Heart left ventricle (tissue), 16 donors: ENCODE measurements at regions of chr12 and their contacts with region 1.

Region 1: GRCh38 chr12:7142056-7142644 is 12.0 kb downstream of the CLSTN3 start:
- DNase-seq: no peak
- ATAC-seq: peak in 2 of 4 donors; percentile 19 to 49
- H3K4me3 ChIP-seq: no peak overlapping the region
- H3K27ac ChIP-seq: no peak overlapping the region
- H3K4me1 ChIP-seq: peaks cover 0 to 6% (median 0%) of the 10 kb centered on the region in 12 donors
- H3K27me3 ChIP-seq: no peaks in the 10 kb centered on the region
- CTCF ChIP-seq: peak; percentile 33 to 63 (median 44)
- POLR2A ChIP-seq: no peak

Region 2: GRCh38 chr12:7188562-7189397 is 46.6 kb after region 1 on chr12:
- intact Hi-C with region 1: loop called in 2 of 10 experiments (anchors 5 kb)
- DNase-seq: peak; percentile 59 to 76 (median 70)
- ATAC-seq: peak; percentile 58 to 79 (median 66)
- H3K4me3 ChIP-seq: peak overlapping the region; percentile 67 to 95 (median 78)
- H3K27ac ChIP-seq: peak overlapping the region; percentile 68 to 97 (median 87)
- H3K4me1 ChIP-seq: peaks cover 4 to 30% (median 13%) of the 10 kb centered on the region in 12 donors
- H3K27me3 ChIP-seq: no peaks in the 10 kb centered on the region
- CTCF ChIP-seq: peak; percentile 34 to 70 (median 53)
- POLR2A ChIP-seq: peak in 1 of 2 donors; percentile 5

Region 3: DNA sequence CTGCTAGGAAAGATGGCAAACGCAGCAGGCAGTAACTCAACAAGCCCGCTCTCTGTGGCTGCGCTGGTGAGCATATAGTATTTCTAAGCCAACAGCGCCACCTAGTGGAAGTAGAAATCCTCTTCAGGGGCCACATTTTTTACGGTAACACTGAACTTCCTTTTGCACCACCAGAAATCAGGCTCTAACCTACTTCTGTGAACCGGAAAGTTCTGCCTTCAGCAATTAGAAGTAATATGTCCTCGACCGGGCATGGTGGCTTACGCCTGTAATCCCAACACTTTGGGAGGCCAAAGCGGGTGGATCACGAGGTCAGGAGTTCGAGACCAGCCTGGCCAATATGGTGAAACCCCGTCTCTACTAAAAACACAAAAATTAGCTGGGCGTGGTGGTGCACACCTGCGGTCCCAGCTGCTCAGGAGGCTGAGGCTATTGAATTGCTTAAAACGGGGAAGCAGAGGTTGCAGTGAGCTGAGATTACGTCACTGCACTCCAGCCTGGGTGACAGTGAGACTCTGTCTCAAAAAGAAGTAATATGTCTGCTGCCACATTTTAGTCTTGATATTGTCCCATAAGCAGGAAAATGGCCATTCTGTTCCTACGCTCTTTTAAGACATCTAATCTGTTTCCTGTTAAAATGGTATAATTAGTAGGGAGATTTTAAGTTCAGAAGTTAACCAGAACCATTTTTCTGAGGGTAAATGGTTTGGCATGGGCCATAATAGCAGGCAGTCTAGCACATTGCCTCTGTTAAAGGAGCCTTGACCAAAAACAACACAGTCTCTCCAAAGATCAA is 496.8 kb after region 1 on chr12:
- intact Hi-C with region 1: loop called in 1 of 10 experiments (anchors 10 kb)
- DNase-seq: peak; percentile 70 to 74 (median 72)
- ATAC-seq: peak; percentile 93 to 97 (median 96)
- H3K4me3 ChIP-seq: peak overlapping the region in 6 of 12 donors; percentile 20 to 55 (median 50)
- H3K27ac ChIP-seq: peak overlapping the region in 1 of 12 donors; percentile 69
- H3K4me1 ChIP-seq: peaks cover 0 to 14% (median 0%) of the 10 kb centered on the region in 12 donors
- H3K27me3 ChIP-seq: peaks cover 0 to 33% (median 4%) of the 10 kb centered on the region in 9 donors
- CTCF ChIP-seq: peak; percentile 80 to 96 (median 86)
- POLR2A ChIP-seq: no peak